ENCODE measurements at regions of chr17 and their contacts with region 1.

Region 1: GRCh38 chr17:57855391-57856035 is 5.7 kb upstream of the MRPS23 start:
- DNase-seq: no peak
- ATAC-seq: no peak
- H3K4me3 ChIP-seq: no peak overlapping the region
- H3K27ac ChIP-seq: no peak overlapping the region
- H3K4me1 ChIP-seq: peaks cover 25 to 41% of the 10 kb centered on the region in 2 experiments
- H3K27me3 ChIP-seq: peaks cover 0 to 4% of the 10 kb centered on the region in 2 experiments; a peak in 1 of 5 replicates
- CTCF ChIP-seq: no peak
- EP300 ChIP-seq: no peak
- POLR2A ChIP-seq: no peak
- RAD21 ChIP-seq: no peak

Region 2: GRCh38 chr17:57892146-57892828 is 36.8 kb after region 1 on chr17:
- CTCF ChIA-PET with region 1: no interaction called
- POLR2A ChIA-PET with region 1: interaction called, 3 read pairs
- in situ Hi-C with region 1: no loop called
- intact Hi-C with region 1: loop called (anchors 2 kb)
- DNase-seq: peak; percentile 82 to 86 (median 84)
- ATAC-seq: peak; percentile 96
- H3K4me3 ChIP-seq: no peak overlapping the region
- H3K27ac ChIP-seq: no peak overlapping the region
- H3K4me1 ChIP-seq: peaks cover 0 to 8% of the 10 kb centered on the region in 2 experiments; a peak in 2 of 5 replicates
- H3K27me3 ChIP-seq: peaks cover 6 to 45% of the 10 kb centered on the region in 2 experiments
- CTCF ChIP-seq: peak; percentile 91 to 98 (median 94)
- EP300 ChIP-seq: no peak
- POLR2A ChIP-seq: no peak
- RAD21 ChIP-seq: peak; percentile 63 to 86

Measured in K562 (cell line).